ENCODE measurements at regions of chr16 and their contacts with region 1.

Region 1: DNA sequence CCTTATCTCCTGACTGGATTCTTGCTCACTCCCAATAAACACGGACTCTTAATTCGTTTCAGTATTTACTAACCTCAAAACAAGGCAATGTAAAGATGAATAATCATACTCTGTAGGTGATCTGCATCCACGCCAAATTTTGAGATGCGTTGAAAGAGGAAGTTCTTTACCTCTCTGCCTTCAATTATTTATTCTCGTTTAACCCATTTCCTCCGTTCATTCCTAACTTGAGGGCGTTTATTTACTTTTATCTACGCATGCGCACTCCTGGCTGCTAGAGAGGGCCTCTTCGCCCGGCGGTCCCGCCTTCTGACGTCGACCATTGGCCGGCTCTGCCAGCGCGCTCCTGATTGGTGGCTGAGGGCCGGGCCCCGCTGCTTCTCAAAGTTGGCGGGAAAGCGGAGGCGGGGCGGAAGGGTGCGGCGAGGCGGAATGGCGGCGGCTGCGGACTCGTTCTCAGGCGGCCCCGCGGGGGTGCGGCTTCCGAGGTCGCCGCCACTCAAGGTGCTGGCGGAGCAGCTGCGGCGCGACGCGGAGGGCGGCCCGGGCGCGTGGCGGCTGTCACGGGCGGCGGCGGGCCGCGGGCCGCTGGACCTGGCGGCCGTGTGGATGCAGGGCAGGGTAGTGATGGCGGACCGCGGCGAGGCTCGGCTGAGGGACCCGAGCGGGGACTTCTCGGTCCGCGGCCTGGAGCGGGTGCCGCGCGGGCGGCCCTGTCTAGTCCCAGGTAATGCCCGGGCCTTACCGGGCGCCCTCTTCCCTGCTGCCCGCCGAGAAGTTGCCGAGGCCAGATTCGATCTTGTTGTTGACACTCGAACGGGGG is at the start of gene RMI2:
- DNase-seq: peak; percentile 99
- ATAC-seq: peak; percentile 96
- H3K4me3 Mint-ChIP-seq: peak within 1 kb of the TSS; percentile 90
- H3K27ac Mint-ChIP-seq: peak within 1 kb of the TSS; percentile 94
- H3K4me1 Mint-ChIP-seq: peaks cover 49% of the 10 kb centered on the region
- H3K27me3 Mint-ChIP-seq: no peaks in the 10 kb centered on the region
- total RNA-seq, gene RMI2: 56.0 to 69.8 TPM

Region 2: DNA sequence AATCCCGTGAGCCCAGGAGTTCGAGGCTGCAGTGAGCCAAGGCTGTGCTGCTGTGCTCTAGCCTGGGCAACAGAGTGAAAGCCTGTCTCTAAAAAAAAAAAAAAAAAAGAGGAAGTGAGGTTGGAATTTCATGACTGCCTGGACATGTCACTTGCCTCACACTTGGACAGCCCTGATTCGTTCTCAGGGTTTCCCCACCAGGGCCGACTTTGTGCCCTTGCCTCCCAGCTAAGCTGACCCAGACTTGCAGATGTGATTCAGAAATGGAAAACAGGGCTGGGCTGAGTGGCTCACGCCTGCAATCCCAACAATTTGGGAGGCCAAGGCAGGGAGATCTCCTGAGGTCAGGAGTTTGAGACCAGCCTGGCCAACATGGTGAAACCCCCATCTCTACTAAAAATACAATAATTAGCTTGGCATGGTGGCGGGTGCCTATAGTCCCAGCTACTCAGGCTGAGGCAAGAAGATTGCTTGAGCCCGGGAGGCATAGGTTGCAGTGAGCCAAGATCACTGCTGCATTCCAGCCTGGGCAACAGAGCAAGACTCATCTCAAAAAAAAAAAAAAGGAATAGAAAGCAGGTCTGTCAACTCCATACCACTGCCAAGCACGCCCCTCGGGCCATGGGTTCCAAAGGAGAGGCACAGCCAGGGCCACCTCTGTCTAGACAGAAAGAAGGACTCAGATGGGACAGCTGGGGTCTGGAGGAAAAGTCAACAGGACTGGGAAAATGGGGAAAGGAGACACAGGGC is 136.2 kb before region 1 on chr16:
- CTCF ChIA-PET with region 1: no interaction called
- POLR2A ChIA-PET with region 1: no interaction called
- intact Hi-C with region 1: no loop called
- DNase-seq: no peak
- ATAC-seq: no peak
- H3K4me3 Mint-ChIP-seq: no peak overlapping the region
- H3K27ac Mint-ChIP-seq: no peak overlapping the region
- H3K4me1 Mint-ChIP-seq: peaks cover 21% of the 10 kb centered on the region
- H3K27me3 Mint-ChIP-seq: no peaks in the 10 kb centered on the region

Region 3: DNA sequence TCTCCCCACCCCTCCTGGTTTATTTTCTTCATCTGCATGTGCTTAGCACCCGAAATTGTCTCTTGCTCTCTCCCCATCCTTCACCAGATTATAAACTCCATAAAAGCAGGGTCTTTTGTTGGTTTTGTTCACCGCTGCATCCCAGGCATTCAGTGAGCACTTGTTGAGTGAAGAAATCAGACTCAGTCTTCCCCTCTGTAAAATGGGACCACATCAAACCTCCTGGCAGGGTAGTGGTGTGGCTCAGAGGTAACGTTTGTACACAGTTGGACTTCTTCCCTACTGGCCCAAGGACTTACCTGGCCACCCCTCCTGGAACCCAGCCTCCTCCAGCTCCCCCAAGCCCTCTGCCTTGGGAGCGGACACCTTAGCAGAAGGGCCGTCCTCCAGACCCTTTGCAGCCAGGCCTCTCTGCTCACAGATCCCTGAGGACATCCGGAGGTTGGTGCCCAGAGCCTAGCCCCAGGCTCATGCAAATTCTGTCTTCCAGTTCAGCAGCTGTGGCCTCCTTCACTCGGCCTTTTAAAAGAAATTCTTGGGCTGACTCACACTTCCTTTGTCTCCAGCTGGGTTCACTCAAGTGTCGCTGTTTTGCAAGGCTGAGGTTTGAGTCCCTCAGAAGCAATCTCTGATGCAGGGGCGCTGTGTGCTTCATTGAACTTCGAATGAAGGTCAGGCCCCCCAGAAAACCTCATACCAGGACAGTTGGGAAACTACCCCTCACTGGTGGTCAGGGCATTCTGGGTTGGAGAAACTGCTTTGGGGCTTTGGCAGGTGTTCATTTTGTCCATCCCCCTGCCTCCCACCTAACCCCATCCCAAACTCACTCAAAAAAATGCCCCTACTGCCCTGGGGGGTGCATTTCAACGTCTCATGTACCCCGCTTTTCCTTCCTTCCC is 16.8 kb before region 1 on chr16:
- CTCF ChIA-PET with region 1: interaction called, 6 read pairs
- POLR2A ChIA-PET with region 1: no interaction called
- intact Hi-C with region 1: loop called (anchors 2 kb)
- DNase-seq: peak; percentile 73
- ATAC-seq: peak; percentile 81
- H3K4me3 Mint-ChIP-seq: peak overlapping the region; percentile 37
- H3K27ac Mint-ChIP-seq: peak overlapping the region; percentile 64
- H3K4me1 Mint-ChIP-seq: peaks cover 51% of the 10 kb centered on the region
- H3K27me3 Mint-ChIP-seq: no peaks in the 10 kb centered on the region

Region 4: GRCh38 chr16:11361701-11362451 is 16.6 kb after region 1 on chr16:
- CTCF ChIA-PET with region 1: no interaction called
- POLR2A ChIA-PET with region 1: no interaction called
- intact Hi-C with region 1: loop called in 1 of 2 experiments (anchors 1 kb)
- DNase-seq: peak; percentile 54
- ATAC-seq: peak; percentile 27
- H3K4me3 Mint-ChIP-seq: peak overlapping the region; percentile 45
- H3K27ac Mint-ChIP-seq: peak overlapping the region; percentile 61
- H3K4me1 Mint-ChIP-seq: peaks cover 60% of the 10 kb centered on the region
- H3K27me3 Mint-ChIP-seq: peaks cover 7% of the 10 kb centered on the region

Region 5: GRCh38 chr16:11423315-11424117 is 78.3 kb after region 1 on chr16:
- CTCF ChIA-PET with region 1: no interaction called
- POLR2A ChIA-PET with region 1: no interaction called
- intact Hi-C with region 1: no loop called
- DNase-seq: no peak
- ATAC-seq: no peak
- H3K4me3 Mint-ChIP-seq: no peak overlapping the region
- H3K27ac Mint-ChIP-seq: no peak overlapping the region
- H3K4me1 Mint-ChIP-seq: no peaks in the 10 kb centered on the region
- H3K27me3 Mint-ChIP-seq: no peaks in the 10 kb centered on the region

Region 6: DNA sequence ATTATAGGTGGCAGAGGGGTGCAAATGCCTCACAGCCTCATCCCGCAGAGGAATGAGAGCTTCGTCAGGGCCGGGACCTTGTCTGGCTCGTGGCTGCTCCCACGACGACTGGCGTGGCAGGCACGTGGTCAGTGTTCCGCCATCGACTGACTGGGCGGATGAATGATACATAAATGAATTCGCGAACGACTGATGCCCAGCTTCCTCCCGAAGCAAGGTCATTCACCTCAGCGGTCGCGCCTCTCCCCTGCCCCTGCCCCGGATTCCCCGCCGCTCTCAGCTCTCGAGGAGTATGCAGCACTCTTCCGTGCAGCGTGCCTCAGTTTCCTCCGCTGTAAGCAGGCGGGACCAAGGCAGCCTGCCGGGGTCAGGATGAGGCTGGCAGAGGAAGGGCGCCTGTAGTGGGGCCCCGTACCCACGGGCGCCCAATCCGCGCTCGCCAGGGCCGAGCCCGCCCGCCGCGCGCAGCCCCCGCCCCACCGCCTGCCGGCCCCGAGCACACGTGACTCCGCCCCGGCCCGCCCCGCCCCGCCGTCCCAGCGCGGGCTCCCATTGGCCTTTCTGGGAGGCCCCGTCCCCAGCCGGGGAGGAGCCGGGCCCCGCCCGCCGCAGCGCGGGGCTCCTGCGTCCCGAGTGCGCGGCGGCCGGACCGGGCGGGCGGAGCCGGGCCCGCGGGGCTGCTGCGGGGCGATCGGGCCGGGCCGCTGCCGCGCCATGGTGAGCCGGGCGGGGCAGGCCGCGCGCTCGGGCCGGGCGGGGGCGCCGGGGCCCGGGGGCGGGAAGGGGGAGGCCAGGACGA is 322.8 kb after region 1 on chr16 and contains the start of gene SNN:
- CTCF ChIA-PET with region 1: no interaction called
- POLR2A ChIA-PET with region 1: no interaction called
- intact Hi-C with region 1: loop called in 1 of 2 experiments (anchors 1 kb)
- DNase-seq: peak; percentile 93
- ATAC-seq: peak; percentile 90
- H3K4me3 Mint-ChIP-seq: peak within 1 kb of the TSS; percentile 72
- H3K27ac Mint-ChIP-seq: no peak within 1 kb of the TSS
- H3K4me1 Mint-ChIP-seq: peaks cover 73% of the 10 kb centered on the region
- H3K27me3 Mint-ChIP-seq: no peaks in the 10 kb centered on the region
- total RNA-seq, gene SNN: 6.0 to 7.2 TPM